ENCODE measurements at regions of chr5 and their contacts with region 1.

Region 1: DNA sequence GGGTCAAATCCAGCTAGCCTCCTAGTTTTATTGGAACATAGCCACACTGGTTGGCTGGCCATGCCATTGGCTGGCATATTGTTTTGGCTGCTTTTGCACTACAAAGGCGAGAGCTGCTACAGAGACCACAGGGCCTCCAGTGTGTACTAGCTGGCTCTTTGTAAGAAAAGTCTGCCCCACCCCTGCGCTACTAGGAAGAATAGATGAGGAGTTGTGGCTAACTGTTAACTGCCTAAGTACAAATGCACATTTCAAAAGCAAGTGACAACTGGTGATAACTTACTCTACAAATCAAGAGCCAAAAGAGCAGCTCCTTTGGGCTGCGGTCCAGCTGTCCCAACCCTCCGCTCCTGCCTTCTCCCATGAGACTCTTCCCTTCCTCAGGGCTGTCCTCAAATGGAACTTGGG is 63.9 kb downstream of the SERINC5 start:
- DNase-seq: peak; percentile 47
- H3K4me3 Mint-ChIP-seq: peak overlapping the region; percentile 62
- H3K27ac Mint-ChIP-seq: peak overlapping the region; percentile 86
- H3K4me1 Mint-ChIP-seq: peaks cover 86% of the 10 kb centered on the region
- H3K27me3 Mint-ChIP-seq: no peaks in the 10 kb centered on the region

Region 2: DNA sequence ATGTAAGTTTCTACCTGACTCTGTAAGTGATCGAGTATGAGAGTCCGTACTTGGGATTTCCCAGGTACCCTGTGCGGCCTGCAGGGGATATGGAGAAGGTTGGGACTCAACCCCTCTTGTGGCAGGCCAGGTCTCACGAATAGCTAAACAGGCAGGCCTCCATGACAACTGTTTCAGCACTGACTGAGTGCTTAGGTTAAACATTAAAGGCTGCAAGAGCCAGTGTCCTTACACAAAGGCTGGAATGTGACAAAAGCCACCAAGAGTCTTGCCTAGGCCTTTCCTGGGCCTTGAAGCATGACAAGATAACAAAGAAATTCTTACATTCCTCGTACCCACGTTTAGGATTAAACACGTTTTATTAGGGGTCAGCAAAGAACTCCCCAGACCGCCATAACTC is 98.2 kb before region 1 on chr5:
- intact Hi-C with region 1: loop called (anchors 5 kb)
- DNase-seq: no peak
- H3K4me3 Mint-ChIP-seq: no peak overlapping the region
- H3K27ac Mint-ChIP-seq: no peak overlapping the region
- H3K4me1 Mint-ChIP-seq: peaks cover 15% of the 10 kb centered on the region
- H3K27me3 Mint-ChIP-seq: no peaks in the 10 kb centered on the region

Region 3: GRCh38 chr5:80181618-80182211 is 10.3 kb before region 1 on chr5:
- intact Hi-C with region 1: loop called (anchors 1 kb)
- DNase-seq: peak; percentile 41
- H3K4me3 Mint-ChIP-seq: peak overlapping the region; percentile 62
- H3K27ac Mint-ChIP-seq: peak overlapping the region; percentile 85
- H3K4me1 Mint-ChIP-seq: peaks cover 68% of the 10 kb centered on the region
- H3K27me3 Mint-ChIP-seq: no peaks in the 10 kb centered on the region

Region 4: DNA sequence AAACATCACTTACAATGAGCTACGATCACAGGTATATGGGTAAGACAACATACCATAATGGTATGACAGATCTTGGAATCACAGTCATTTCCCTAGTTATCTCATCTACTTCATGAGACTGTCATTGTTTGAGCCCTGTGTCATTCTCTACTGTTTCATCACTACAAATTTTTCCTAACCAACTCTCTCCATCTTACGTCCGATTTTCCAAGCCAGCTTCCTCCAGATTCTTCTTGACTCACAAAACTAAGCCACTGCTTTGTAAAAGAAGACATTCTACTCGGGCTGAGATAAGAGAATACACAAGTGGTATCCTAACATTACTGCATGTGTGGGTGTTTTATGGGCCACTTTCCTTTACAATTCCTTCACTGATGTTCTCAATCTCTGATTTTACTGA is 14.3 kb after region 1 on chr5:
- intact Hi-C with region 1: loop called (anchors 1 kb)
- DNase-seq: no peak
- H3K4me3 Mint-ChIP-seq: no peak overlapping the region
- H3K27ac Mint-ChIP-seq: peak overlapping the region; percentile 11
- H3K4me1 Mint-ChIP-seq: peaks cover 54% of the 10 kb centered on the region
- H3K27me3 Mint-ChIP-seq: no peaks in the 10 kb centered on the region

Region 5: GRCh38 chr5:80211327-80211726 is 19.3 kb after region 1 on chr5:
- intact Hi-C with region 1: loop called (anchors 1 kb)
- DNase-seq: no peak
- H3K4me3 Mint-ChIP-seq: no peak overlapping the region
- H3K27ac Mint-ChIP-seq: no peak overlapping the region
- H3K4me1 Mint-ChIP-seq: peaks cover 67% of the 10 kb centered on the region
- H3K27me3 Mint-ChIP-seq: no peaks in the 10 kb centered on the region

Region 6: GRCh38 chr5:80308526-80308925 is 116.5 kb after region 1 on chr5:
- intact Hi-C with region 1: loop called (anchors 5 kb)
- DNase-seq: no peak
- H3K4me3 Mint-ChIP-seq: no peak overlapping the region
- H3K27ac Mint-ChIP-seq: no peak overlapping the region
- H3K4me1 Mint-ChIP-seq: no peaks in the 10 kb centered on the region
- H3K27me3 Mint-ChIP-seq: peaks cover 8% of the 10 kb centered on the region

Measured in activated T-helper 1 cell treated with anti-CD3 and anti-CD28 coated beads, Interleukin-12 subunit alpha, Interleukin-12 subunit beta, Interleukin-2, Interleukin-4 antibody, amounts not matched to agents 30 ng/mL and 10 ng/mL and 1 ng/mL, durations not matched to agents 14 hours and 24 hours and 36 hours (primary cell).